Activated CD8-positive, alpha-beta T cell treated with anti-CD3 and anti-CD28 coated beads for 36 hours (primary cell): ENCODE measurements at regions of chr18 and their contacts with region 1.

Region 1: DNA sequence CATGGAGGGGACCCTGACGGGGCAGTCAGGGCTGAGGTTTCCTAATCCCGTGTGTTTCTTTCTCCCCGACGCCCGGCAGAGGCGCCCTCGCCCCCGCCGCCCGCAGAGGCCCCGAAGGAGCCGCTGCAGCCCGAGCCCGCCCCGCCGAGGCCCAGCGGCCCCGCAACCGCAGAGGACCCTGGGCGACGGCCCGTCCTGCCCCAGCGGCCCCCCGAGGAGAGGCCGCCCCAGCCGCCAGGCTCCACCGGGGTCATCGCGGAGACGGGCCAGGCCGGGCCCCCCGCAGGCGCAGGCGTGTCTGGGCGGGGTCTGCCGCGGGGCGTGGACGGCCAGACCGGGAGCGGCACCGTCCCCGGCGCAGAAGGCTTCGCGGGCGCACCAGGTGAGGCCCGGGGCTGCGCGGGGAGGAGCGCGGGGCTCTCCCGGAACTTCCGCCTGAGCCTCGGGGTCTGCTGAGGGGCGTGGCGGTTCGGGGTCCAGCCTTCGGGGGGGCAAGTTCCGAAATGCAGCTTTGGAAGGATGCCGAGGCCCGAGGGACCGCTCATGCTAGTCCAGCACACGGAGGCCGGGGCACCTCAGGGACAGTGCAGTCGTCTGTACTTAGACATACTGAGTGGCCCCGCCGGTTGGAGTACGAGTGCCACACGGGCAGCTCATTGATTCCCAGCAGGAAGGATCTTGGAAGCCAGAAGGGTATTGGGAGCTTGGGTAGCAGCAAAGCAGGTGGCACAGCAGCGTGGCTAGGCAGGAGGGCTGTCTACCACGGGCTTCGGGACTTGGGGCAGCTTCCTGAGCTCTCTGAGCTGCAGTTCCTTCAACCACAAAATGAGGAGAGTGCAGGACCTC is 60.1 kb downstream of the EMILIN2 start:
- DNase-seq: peak; percentile 50
- ATAC-seq: peak; percentile 60
- H3K4me3 Mint-ChIP-seq: peak overlapping the region; percentile 86
- H3K27ac Mint-ChIP-seq: peak overlapping the region; percentile 78
- H3K4me1 Mint-ChIP-seq: peaks cover 26% of the 10 kb centered on the region
- H3K27me3 Mint-ChIP-seq: no peaks in the 10 kb centered on the region
- CTCF ChIP-seq: peak; percentile 42

Region 2: DNA sequence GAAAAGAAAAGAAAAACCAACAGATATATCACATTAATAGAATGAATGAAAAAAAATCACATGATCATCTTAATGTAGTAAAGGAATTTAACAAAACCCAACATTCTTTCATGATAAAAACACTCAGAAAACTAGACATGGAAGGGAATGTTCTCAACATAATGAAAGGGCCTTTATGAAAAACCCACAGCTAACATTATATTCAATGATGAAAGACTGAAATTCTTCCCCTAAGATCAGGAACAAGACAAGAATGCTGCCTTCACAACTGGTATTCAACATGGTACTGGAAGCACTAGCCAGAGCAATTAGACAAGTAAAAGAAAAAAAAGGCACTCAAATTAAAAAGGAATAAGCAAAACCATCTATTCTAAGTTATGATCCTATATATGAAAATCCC is 88.6 kb before region 1 on chr18:
- CTCF ChIA-PET with region 1: no interaction called
- POLR2A ChIA-PET with region 1: no interaction called
- intact Hi-C with region 1: loop called (anchors 10 kb)
- DNase-seq: no peak
- ATAC-seq: no peak
- H3K4me3 Mint-ChIP-seq: no peak overlapping the region
- H3K27ac Mint-ChIP-seq: no peak overlapping the region
- H3K4me1 Mint-ChIP-seq: no peaks in the 10 kb centered on the region
- H3K27me3 Mint-ChIP-seq: no peaks in the 10 kb centered on the region
- CTCF ChIP-seq: no peak

Region 3: DNA sequence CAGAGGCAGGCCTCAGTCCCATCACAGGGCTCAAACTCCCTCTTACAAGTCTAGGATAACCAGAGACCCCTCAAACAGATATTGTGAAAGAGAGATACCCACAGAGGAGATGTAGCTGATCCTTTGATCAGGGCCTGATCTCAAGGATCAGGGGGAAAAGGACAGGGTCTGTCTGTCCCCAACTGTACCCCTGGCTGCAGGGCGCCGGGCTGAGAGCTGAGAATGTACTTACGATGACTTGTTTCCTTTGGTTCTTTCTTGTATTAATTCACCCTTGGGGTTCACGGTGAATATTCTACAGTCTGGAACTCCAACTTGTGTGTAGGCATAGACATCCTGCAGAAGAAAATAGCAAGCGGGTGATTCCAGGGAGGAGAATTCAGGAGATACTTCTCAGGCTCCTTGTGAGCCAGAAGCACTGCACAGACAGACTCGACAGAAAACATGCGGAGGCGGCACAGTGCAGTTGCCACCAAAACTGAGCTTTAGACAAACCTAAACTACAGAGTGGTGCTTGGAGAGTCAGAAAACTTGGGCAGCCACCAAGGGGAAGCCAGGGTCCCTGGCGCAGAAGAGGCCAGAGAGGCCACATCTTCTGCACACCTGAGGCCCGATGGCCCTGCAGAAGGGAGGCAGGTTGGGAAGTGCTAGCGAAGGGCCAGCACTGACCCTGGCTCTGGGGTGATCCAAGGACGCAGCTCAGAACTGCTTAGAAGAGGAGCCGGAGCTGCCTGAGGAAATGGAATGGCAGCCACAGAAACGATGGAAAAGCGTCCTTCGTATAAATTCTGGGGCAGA is 13.8 kb after region 1 on chr18:
- CTCF ChIA-PET with region 1: interaction called, 4 read pairs
- POLR2A ChIA-PET with region 1: interaction called, 13 read pairs
- intact Hi-C with region 1: no loop called
- DNase-seq: no peak
- ATAC-seq: no peak
- H3K4me3 Mint-ChIP-seq: no peak overlapping the region
- H3K27ac Mint-ChIP-seq: peak overlapping the region; percentile 58
- H3K4me1 Mint-ChIP-seq: peaks cover 28% of the 10 kb centered on the region
- H3K27me3 Mint-ChIP-seq: no peaks in the 10 kb centered on the region
- CTCF ChIP-seq: no peak

Region 4: DNA sequence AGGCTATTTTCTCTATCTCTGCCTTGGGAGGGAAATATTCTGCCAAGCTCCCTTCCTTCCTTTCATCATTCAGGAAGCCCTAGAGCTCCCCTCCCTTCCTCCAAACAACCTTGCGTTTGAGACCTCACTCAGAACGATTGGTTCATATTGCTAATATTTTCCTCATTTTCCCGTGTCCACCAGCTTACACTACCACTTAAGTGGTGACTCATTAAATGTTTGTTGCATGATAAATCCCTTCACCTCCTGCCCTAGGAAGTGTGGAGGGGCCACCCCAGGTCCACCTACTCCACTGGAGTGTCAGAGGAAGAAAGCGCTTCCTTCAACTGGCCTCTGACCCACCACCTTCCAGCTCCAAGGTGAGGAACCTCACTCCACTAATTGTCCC is 108.3 kb after region 1 on chr18:
- CTCF ChIA-PET with region 1: no interaction called
- POLR2A ChIA-PET with region 1: no interaction called
- intact Hi-C with region 1: no loop called
- DNase-seq: no peak
- ATAC-seq: no peak
- H3K4me3 Mint-ChIP-seq: peak overlapping the region; percentile 0
- H3K27ac Mint-ChIP-seq: peak overlapping the region; percentile 65
- H3K4me1 Mint-ChIP-seq: peaks cover 50% of the 10 kb centered on the region
- H3K27me3 Mint-ChIP-seq: no peaks in the 10 kb centered on the region
- CTCF ChIP-seq: no peak